A549 (cell line): ENCODE measurements at regions of chr11 and their contacts with region 1.

Region 1: GRCh38 chr11:86218125-86219084 is 26.1 kb upstream of the EED start:
- DNase-seq: peak; percentile 77 to 89
- ATAC-seq: peak; percentile 95 to 98
- H3K4me3 ChIP-seq: peak overlapping the region; percentile 22; the same call in 2 of the 3 replicates
- H3K27ac ChIP-seq: peak overlapping the region; percentile 12 to 42; a peak in 4 of 6 replicates
- H3K4me1 ChIP-seq: no peaks in the 10 kb centered on the region
- CTCF ChIP-seq: peak; percentile 84
- EP300 ChIP-seq: no peak
- POLR2A ChIP-seq: no peak
- RAD21 ChIP-seq: peak; percentile 80 to 90

Region 2: GRCh38 chr11:86202013-86202336 is 16.4 kb before region 1 on chr11:
- CTCF ChIA-PET with region 1: interaction called, 25 read pairs
- POLR2A ChIA-PET with region 1: no interaction called
- DNase-seq: no peak
- ATAC-seq: no peak
- H3K4me3 ChIP-seq: no peak overlapping the region
- H3K27ac ChIP-seq: no peak overlapping the region
- H3K4me1 ChIP-seq: no peaks in the 10 kb centered on the region
- CTCF ChIP-seq: no peak
- EP300 ChIP-seq: no peak
- POLR2A ChIP-seq: no peak
- RAD21 ChIP-seq: no peak

Region 3: DNA sequence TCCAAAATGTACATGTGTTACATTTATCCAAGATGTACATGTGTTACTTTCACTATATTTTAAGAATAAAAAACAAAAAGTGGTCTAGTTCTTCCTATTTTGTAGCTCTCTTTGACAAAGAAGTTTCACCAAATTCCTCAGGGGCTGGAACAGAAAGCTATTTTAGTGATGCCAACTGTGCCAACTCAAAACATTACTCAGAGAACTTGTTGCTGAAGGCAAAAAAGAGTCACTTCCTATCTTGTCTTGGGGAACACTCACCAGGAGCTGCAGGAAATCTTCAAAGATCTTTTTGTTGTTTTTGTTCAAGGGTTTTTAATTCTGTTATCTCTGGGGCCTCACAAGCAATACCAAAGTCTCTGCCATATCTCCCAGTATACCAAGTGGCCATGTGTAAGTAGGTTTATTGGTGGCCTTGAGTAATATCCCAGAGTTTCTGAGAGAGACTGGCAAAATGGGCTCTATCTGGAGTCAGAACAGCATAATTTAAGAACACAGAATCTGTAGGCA is 12.6 kb after region 1 on chr11:
- CTCF ChIA-PET with region 1: interaction called, 20 read pairs
- POLR2A ChIA-PET with region 1: no interaction called
- DNase-seq: no peak
- ATAC-seq: no peak
- H3K4me3 ChIP-seq: no peak overlapping the region
- H3K27ac ChIP-seq: no peak overlapping the region
- H3K4me1 ChIP-seq: no peaks in the 10 kb centered on the region
- CTCF ChIP-seq: no peak
- EP300 ChIP-seq: no peak
- POLR2A ChIP-seq: no peak
- RAD21 ChIP-seq: no peak